SK-N-SH (cell line): ENCODE measurements at regions of chr2 and their contacts with region 1.

Region 1: DNA sequence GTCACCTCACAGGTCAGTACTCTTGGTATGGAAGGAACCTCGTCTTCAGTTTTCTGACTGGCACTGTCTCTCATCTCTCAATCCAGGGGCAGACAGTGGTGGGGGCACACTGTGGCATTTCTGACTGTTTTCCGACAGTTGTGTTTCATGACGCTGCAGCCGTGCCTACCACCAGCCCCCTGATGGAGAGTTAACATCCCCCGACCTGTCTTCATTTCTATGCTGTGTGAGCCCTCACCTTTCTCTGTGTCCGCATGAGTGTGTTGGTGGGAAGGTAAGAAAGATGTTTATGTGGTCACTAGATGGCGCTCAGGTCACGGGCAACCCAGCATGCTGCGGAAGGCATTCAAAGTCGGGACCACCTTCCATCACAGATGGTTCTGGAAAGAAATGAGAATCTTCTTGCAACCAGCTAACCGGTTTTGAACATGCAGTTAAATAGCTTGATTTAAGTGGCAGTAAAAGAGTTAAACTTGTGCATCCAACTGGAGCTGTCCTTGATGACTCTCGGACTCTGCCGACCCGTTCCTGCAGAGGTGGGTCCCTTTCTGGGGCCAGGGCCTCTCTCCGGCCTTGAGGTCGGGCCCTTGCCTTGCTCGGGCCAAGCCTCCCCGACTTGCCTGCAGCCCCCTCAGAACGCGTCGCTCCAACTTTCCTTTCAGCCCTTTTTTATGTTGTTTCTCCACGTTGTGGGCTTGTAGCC is 92.4 kb downstream of the DYSF start:
- DNase-seq: peak; percentile 82
- H3K4me3 ChIP-seq: peak overlapping the region; percentile 12 to 19; a peak in 2 of 4 replicates
- H3K27ac ChIP-seq: no peak overlapping the region
- H3K4me1 ChIP-seq: no peaks in the 10 kb centered on the region; a peak in 1 of 4 replicates
- H3K27me3 ChIP-seq: no peaks in the 10 kb centered on the region; the same call in 1 of the 2 replicates
- CTCF ChIP-seq: peak; percentile 81
- EP300 ChIP-seq: no peak
- RAD21 ChIP-seq: peak; percentile 97

Region 2: DNA sequence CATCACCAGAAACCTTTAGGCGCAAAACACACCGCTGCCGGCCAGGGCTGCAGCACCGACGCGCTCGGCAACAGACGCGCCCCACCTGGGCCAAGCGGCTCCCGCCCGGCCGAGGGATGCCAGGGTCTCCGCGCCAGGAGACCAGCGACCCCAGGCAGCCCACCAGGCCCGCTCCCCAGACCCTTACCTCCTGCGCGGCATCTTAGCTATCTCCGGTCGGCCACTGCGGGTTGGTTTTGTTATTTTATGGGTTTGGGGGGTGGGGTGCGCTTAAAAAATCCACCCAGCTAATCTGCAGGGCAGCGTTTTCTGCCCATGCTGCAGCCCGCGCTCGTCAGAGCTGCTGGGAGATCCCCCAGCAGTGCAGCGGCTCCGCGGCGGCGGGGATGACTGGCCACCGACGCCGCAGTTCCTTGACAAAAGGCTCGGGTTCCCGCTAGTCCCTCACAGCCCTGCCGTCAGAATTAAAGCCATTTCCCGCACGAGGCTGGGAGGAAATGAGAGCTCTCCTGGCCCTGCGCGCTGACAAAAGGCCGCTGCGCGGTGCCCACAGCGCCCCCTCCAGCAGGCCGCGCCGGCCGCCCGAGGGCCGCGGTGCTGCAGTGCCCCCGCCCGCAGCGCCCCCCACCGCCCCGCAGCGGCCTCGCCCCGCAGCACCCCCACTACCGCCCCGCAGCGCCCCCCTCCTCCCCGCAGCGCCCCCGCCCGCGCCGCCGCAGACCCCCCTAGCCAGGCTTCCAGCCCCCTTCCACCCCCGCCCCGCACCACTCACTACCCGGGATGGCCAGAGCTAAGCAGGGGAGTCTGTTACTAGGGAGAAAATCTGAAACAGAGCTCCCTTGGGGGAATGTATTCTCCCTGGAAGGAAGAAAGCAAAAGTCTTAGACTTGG is 777.8 kb before region 1 on chr2 and contains the start of gene ADD2:
- CTCF ChIA-PET with region 1: no interaction called
- POLR2A ChIA-PET with region 1: no interaction called
- DNase-seq: peak; percentile 93
- H3K4me3 ChIP-seq: peak within 1 kb of the TSS; percentile 50 to 52
- H3K27ac ChIP-seq: peak within 1 kb of the TSS in 1 of 2 experiments; percentile 73; a peak in 2 of 4 replicates
- H3K4me1 ChIP-seq: peaks cover 0 to 10% of the 10 kb centered on the region in 2 experiments; a peak in 2 of 4 replicates
- H3K27me3 ChIP-seq: peaks cover 25% of the 10 kb centered on the region
- CTCF ChIP-seq: peak; percentile 38
- EP300 ChIP-seq: no peak
- RAD21 ChIP-seq: no peak
- polyA plus RNA-seq, gene ADD2: 0.30 and 0.50 TPM in 2 replicates

Region 3: GRCh38 chr2:71331581-71332434 is 213.9 kb before region 1 on chr2 and contains the start of gene ZNF638:
- CTCF ChIA-PET with region 1: no interaction called
- POLR2A ChIA-PET with region 1: no interaction called
- DNase-seq: peak; percentile 97
- H3K4me3 ChIP-seq: peak within 1 kb of the TSS; percentile 91 to 94
- H3K27ac ChIP-seq: peak within 1 kb of the TSS; percentile 76 to 97
- H3K4me1 ChIP-seq: peaks cover 0 to 12% of the 10 kb centered on the region in 2 experiments; a peak in 3 of 4 replicates
- H3K27me3 ChIP-seq: no peaks in the 10 kb centered on the region
- CTCF ChIP-seq: peak; percentile 71
- EP300 ChIP-seq: no peak
- RAD21 ChIP-seq: peak; percentile 50
- polyA plus RNA-seq, gene ZNF638: 28.1 and 32.2 TPM in 2 replicates

Region 4: GRCh38 chr2:71558300-71559051 is 12.8 kb after region 1 on chr2:
- CTCF ChIA-PET with region 1: interaction called, 33 read pairs
- POLR2A ChIA-PET with region 1: no interaction called
- DNase-seq: no peak
- H3K4me3 ChIP-seq: no peak overlapping the region
- H3K27ac ChIP-seq: no peak overlapping the region
- H3K4me1 ChIP-seq: peaks cover 0 to 29% of the 10 kb centered on the region in 2 experiments; a peak in 1 of 4 replicates
- H3K27me3 ChIP-seq: peaks cover 7% of the 10 kb centered on the region; the same call in 1 of the 2 replicates
- CTCF ChIP-seq: no peak
- EP300 ChIP-seq: no peak
- RAD21 ChIP-seq: no peak